ENCODE measurements at regions of chr21 and their contacts with region 1.

Region 1: DNA sequence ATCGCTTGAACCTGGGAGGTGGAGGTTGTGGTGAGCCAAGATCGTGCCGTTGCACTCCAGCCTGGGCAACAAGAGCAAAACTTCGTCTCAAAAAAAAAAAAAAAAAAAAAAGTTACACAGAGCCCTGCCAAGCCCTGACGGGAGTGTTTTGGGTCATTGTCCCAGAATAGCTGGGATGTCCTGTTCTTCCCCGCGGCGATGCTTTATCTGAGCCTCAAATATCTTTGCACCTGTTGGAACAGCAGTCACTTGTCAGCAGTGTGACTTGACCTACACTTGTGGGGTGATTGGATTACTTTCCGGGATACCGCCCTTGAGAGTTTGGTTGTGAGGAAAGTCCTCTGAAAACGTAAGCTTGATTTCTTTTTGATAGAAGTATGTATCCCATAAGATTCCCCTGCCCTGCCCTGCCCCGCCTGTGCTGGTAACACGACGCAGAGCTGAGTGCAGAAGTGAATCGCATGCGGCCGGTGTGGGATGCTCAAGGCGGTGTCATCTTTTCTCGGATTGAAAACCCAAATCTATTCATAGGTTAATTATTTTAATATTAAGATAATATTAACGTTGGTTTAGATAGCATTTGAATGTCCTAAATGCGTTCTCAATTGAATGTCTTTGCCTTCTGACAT is 50.9 kb downstream of the PCNT start:
- DNase-seq: peak in 2 of 5 donors; percentile 33 to 79
- ATAC-seq: peak; percentile 79 to 93 (median 88)
- H3K4me3 ChIP-seq: peak overlapping the region in 2 of 12 donors; percentile 30
- H3K27ac ChIP-seq: peak overlapping the region in 11 of 12 donors; percentile 37 to 83 (median 61)
- H3K4me1 ChIP-seq: peaks cover 0 to 12% (median 1%) of the 10 kb centered on the region in 12 donors
- H3K27me3 ChIP-seq: no peaks in the 10 kb centered on the region
- CTCF ChIP-seq: no peak
- POLR2A ChIP-seq: no peak

Region 2: DNA sequence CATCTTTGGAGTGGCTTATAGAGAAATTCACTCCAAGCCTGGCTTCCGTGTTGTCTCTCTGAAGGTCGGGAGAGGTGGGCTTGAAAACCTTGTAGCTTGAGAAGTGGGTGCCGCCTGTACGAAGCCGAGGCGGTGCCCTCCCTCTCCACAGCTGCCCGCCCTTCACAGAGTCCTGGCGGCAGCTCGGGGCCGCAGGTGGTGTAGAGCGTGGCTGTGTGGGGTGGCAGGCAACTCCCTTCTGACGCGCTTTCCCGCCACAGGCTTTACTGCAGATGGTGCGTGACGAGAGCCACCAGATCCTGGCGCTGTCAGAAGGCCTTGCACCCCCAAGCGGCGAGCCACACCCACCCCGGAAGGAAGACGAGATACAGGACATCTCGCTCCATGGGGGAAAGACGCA is 50.7 kb after region 1 on chr21:
- intact Hi-C with region 1: loop called in 1 of 10 experiments (anchors 5 kb)
- DNase-seq: peak in 1 of 5 donors; percentile 64
- ATAC-seq: no peak
- H3K4me3 ChIP-seq: peak overlapping the region in 1 of 12 donors; percentile 10
- H3K27ac ChIP-seq: peak overlapping the region in 1 of 12 donors; percentile 83
- H3K4me1 ChIP-seq: no peaks in the 10 kb centered on the region
- H3K27me3 ChIP-seq: no peaks in the 10 kb centered on the region
- CTCF ChIP-seq: no peak
- POLR2A ChIP-seq: no peak

Measured in heart left ventricle (tissue), 16 donors.